HepG2 (cell line): ENCODE measurements at regions of chrX and their contacts with region 1.

Region 1: DNA sequence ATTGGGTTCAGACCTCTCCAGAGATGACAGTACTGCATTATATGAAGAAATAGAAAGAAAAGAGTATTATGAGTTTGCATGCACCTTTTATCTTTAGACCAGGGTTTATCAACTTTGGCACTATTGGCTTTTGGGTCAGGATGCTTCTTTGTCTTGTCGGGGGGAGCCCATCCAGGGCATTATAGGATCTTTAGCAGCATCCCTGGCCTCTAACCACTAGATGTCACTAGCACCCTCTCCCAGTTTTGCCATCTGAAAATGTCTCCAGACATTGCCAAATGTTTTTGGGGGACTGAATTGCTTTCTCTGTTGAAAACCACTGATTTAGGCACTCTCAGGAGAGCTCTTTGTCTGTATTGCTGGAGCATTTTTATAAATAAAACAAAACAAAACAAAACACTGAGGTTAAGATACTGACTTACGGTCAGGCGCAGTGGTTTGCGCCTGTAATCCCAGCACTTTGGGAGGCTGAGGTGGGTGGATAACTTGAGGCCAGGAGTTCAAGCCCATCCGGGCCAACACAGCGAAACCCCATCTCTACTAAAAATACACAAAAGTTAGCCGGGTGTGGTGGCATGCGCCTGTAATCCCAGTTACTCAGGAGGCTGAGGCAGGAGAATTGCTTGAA is 23.6 kb downstream of the CA5B start:
- DNase-seq: no peak
- ATAC-seq: peak; percentile 44; the same call in 1 of the 3 replicates
- H3K4me3 ChIP-seq: no peak overlapping the region
- H3K27ac ChIP-seq: no peak overlapping the region
- H3K4me1 ChIP-seq: no peaks in the 10 kb centered on the region
- H3K27me3 ChIP-seq: no peaks in the 10 kb centered on the region
- CTCF ChIP-seq: peak; percentile 49
- EP300 ChIP-seq: no peak
- POLR2A ChIP-seq: no peak
- RAD21 ChIP-seq: no peak

Region 2: GRCh38 chrX:15714529-15714928 is 47.1 kb before region 1 on chrX:
- CTCF ChIA-PET with region 1: no interaction called
- POLR2A ChIA-PET with region 1: no interaction called
- in situ Hi-C with region 1: no loop called
- intact Hi-C with region 1: no loop called
- DNase-seq: no peak
- ATAC-seq: no peak
- H3K4me3 ChIP-seq: no peak overlapping the region
- H3K27ac ChIP-seq: no peak overlapping the region
- H3K4me1 ChIP-seq: no peaks in the 10 kb centered on the region
- H3K27me3 ChIP-seq: no peaks in the 10 kb centered on the region
- CTCF ChIP-seq: no peak
- EP300 ChIP-seq: no peak
- POLR2A ChIP-seq: no peak
- RAD21 ChIP-seq: no peak

Region 3: GRCh38 chrX:16087081-16087480 is 325.4 kb after region 1 on chrX:
- CTCF ChIA-PET with region 1: no interaction called
- POLR2A ChIA-PET with region 1: no interaction called
- in situ Hi-C with region 1: no loop called
- intact Hi-C with region 1: no loop called
- DNase-seq: no peak
- ATAC-seq: no peak
- H3K4me3 ChIP-seq: no peak overlapping the region
- H3K27ac ChIP-seq: no peak overlapping the region
- H3K4me1 ChIP-seq: no peaks in the 10 kb centered on the region
- H3K27me3 ChIP-seq: no peaks in the 10 kb centered on the region
- CTCF ChIP-seq: no peak
- EP300 ChIP-seq: no peak
- POLR2A ChIP-seq: no peak
- RAD21 ChIP-seq: no peak

Region 4: DNA sequence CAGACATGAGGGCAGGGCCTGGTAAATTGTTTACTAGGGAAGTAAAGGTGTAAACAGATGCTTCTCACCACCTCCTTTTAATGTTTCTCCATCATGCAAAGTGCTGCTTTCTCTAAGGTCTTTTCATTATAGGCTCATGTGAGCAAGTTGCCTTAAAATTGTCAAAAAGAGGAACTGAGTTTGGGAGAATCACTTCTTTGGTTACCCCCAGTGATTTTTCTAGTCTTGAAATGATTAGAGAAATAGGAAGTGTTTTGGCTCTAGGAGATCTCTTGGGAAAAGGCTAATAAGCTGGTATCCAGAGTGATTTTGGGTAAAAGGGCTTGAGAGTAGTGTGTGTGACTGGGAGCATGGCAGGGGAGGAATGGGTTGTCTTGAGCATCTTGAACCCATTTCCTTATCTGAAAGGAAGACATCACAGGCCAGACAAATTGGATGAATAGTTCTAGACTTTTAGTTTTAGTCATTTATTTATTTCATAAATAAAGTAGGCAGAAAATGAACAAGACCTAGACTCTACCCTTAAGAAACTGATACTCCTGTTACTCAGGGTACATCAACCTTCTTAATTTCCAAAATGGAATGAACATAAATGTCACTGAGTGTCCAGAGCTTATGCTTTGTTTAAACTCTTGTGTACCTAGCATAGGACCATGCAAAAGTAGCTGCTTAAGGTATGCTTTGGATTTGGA is 375.9 kb after region 1 on chrX:
- CTCF ChIA-PET with region 1: no interaction called
- POLR2A ChIA-PET with region 1: no interaction called
- in situ Hi-C with region 1: no loop called
- intact Hi-C with region 1: loop called (anchors 2 kb)
- DNase-seq: no peak
- ATAC-seq: no peak
- H3K4me3 ChIP-seq: no peak overlapping the region
- H3K27ac ChIP-seq: no peak overlapping the region
- H3K4me1 ChIP-seq: no peaks in the 10 kb centered on the region
- H3K27me3 ChIP-seq: no peaks in the 10 kb centered on the region
- CTCF ChIP-seq: no peak
- EP300 ChIP-seq: no peak
- POLR2A ChIP-seq: no peak
- RAD21 ChIP-seq: no peak